Activated naive CD4-positive, alpha-beta T cell treated with anti-CD3 and anti-CD28 coated beads for 36 hours (primary cell): ENCODE measurements at regions of chr12 and their contacts with region 1.

Region 1: DNA sequence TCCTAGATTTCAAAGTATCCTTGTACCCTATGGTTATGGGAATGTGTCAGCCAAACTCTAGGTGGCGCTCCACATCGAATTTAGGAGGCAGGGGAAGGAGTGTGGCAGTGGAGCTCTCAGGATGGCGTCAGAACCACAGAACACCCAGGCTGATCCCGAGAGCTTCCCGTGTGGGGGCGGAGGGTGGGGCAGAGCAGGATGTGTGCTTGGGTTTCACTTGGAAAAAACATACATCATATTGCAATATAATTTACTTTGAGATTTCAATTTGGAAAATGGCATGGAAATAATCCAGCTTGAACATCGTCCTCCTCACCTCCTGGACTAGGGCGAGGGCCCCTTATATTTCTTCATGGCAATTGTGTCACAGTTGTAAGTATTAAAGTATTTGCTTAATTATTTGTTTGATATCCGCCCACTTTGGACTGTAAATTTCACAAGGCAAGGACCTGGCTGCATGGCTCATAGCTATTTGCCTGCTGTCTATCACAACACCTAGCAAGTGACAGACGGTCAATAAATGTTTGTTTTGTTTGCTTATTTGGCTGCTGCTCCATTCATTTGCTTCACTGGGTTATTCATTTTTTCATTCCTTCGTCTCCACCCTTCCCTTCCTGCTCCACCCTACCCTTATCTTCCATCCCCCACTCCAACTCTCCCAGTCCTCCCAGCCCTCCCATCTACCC is 221.5 kb upstream of the HMGA2 start:
- DNase-seq: peak; percentile 73
- H3K4me3 Mint-ChIP-seq: no peak overlapping the region
- H3K27ac Mint-ChIP-seq: no peak overlapping the region
- H3K4me1 Mint-ChIP-seq: no peaks in the 10 kb centered on the region
- H3K27me3 Mint-ChIP-seq: peaks cover 31% of the 10 kb centered on the region

Region 2: GRCh38 chr12:65540140-65540539 is 62.6 kb before region 1 on chr12:
- CTCF ChIA-PET with region 1: no interaction called
- intact Hi-C with region 1: no loop called
- DNase-seq: no peak
- H3K4me3 Mint-ChIP-seq: no peak overlapping the region
- H3K27ac Mint-ChIP-seq: no peak overlapping the region
- H3K4me1 Mint-ChIP-seq: no peaks in the 10 kb centered on the region
- H3K27me3 Mint-ChIP-seq: no peaks in the 10 kb centered on the region

Region 3: DNA sequence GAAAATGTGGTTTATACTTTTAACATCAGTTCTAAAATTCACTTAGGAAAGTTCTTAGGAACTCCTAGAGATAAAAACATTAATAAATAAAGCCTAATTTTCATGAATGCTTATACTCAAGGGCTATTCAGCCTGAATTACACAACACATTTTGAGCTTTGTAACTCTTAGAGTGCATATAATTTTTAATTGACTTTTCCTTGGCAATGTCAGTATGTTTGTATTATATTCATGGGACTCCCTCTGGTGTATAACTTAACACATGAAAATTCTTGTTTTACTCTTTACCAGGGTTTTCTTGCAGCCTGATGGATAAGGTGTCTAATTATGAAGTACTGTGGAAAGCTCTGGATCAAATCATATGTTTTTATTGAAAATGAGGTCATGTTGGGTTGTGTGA is 71.0 kb after region 1 on chr12:
- CTCF ChIA-PET with region 1: interaction called, 3 read pairs
- intact Hi-C with region 1: loop called (anchors 1 kb)
- DNase-seq: no peak
- H3K4me3 Mint-ChIP-seq: no peak overlapping the region
- H3K27ac Mint-ChIP-seq: no peak overlapping the region
- H3K4me1 Mint-ChIP-seq: no peaks in the 10 kb centered on the region
- H3K27me3 Mint-ChIP-seq: peaks cover 37% of the 10 kb centered on the region

Region 4: GRCh38 chr12:65685514-65685913 is 82.8 kb after region 1 on chr12:
- CTCF ChIA-PET with region 1: interaction called, 3 read pairs
- intact Hi-C with region 1: loop called (anchors 1 kb)
- DNase-seq: no peak
- H3K4me3 Mint-ChIP-seq: no peak overlapping the region
- H3K27ac Mint-ChIP-seq: no peak overlapping the region
- H3K4me1 Mint-ChIP-seq: no peaks in the 10 kb centered on the region
- H3K27me3 Mint-ChIP-seq: peaks cover 6% of the 10 kb centered on the region

Region 5: DNA sequence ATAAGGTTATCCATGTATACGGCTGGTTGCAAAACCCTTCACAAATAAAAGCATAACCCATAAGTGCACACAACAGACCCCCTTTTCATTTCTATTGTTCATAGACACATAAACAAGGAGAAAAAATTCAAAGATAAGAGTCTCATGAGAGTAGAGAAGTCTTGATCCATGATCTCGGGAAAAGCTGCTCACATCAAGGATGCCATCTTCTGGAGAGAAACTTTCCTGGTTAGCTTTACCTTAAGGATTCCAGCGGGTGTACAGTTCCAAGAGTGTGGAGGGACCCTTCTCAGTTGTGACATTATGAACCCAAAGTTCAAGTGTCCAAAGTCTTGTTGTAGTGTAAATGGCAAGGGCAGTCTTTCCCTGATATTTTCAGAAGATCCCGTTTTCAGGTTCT is 383.3 kb after region 1 on chr12:
- CTCF ChIA-PET with region 1: interaction called, 3 read pairs
- intact Hi-C with region 1: loop called (anchors 1 kb)
- DNase-seq: no peak
- H3K4me3 Mint-ChIP-seq: no peak overlapping the region
- H3K27ac Mint-ChIP-seq: no peak overlapping the region
- H3K4me1 Mint-ChIP-seq: no peaks in the 10 kb centered on the region
- H3K27me3 Mint-ChIP-seq: peaks cover 5% of the 10 kb centered on the region

Region 6: DNA sequence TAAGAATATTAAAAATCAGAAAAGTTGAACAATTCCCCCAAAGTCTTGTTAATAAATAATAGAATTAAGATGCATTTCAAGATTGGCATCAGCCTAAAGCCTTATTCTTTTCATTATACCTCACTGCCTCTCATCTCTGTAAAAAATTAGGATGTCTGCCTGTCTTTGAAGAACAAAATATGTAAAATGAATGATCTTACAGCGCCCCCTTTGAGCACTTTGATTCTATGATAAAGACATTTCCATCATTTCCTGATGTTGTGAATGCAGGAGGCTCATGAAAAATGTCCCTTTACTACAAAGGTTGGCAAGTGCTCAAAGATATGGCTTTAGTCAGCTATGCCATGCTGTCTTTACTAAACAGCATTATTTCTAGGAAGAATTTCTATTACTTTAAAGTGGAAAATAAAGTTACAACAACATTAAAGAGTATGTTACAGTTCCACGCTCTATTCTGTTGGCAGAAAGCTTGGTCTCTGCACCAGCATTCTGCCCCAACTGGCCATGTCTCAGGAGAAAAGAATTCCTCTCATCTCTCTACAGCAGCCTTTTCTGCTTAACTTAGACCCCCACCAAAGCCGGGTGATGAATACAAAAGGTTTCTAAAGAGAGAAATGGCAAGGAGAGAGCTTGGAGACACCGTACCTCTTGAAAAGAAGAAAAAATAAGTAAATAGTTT is 432.7 kb after region 1 on chr12:
- CTCF ChIA-PET with region 1: no interaction called
- intact Hi-C with region 1: loop called (anchors 5 kb)
- DNase-seq: no peak
- H3K4me3 Mint-ChIP-seq: no peak overlapping the region
- H3K27ac Mint-ChIP-seq: no peak overlapping the region
- H3K4me1 Mint-ChIP-seq: no peaks in the 10 kb centered on the region
- H3K27me3 Mint-ChIP-seq: peaks cover 14% of the 10 kb centered on the region

Region 7: GRCh38 chr12:66087365-66087943 is 484.7 kb after region 1 on chr12:
- CTCF ChIA-PET with region 1: interaction called, 3 read pairs
- intact Hi-C with region 1: loop called (anchors 1 kb)
- DNase-seq: peak; percentile 81
- H3K4me3 Mint-ChIP-seq: no peak overlapping the region
- H3K27ac Mint-ChIP-seq: no peak overlapping the region
- H3K4me1 Mint-ChIP-seq: no peaks in the 10 kb centered on the region
- H3K27me3 Mint-ChIP-seq: peaks cover 12% of the 10 kb centered on the region